GM12878 (cell line): ENCODE measurements at regions of chr7 and their contacts with region 1.

Region 1: GRCh38 chr7:106552645-106553445 is 108.1 kb downstream of the CCDC71L start:
- DNase-seq: peak; percentile 97
- ATAC-seq: peak; percentile 98
- H3K4me3 ChIP-seq: no peak overlapping the region
- H3K27ac ChIP-seq: peak overlapping the region; percentile 79
- H3K4me1 ChIP-seq: peaks cover 19% of the 10 kb centered on the region
- H3K27me3 ChIP-seq: no peaks in the 10 kb centered on the region
- CTCF ChIP-seq: no peak
- EP300 ChIP-seq: peak; percentile 97 to 100
- POLR2A ChIP-seq: no peak
- RAD21 ChIP-seq: no peak

Region 2: DNA sequence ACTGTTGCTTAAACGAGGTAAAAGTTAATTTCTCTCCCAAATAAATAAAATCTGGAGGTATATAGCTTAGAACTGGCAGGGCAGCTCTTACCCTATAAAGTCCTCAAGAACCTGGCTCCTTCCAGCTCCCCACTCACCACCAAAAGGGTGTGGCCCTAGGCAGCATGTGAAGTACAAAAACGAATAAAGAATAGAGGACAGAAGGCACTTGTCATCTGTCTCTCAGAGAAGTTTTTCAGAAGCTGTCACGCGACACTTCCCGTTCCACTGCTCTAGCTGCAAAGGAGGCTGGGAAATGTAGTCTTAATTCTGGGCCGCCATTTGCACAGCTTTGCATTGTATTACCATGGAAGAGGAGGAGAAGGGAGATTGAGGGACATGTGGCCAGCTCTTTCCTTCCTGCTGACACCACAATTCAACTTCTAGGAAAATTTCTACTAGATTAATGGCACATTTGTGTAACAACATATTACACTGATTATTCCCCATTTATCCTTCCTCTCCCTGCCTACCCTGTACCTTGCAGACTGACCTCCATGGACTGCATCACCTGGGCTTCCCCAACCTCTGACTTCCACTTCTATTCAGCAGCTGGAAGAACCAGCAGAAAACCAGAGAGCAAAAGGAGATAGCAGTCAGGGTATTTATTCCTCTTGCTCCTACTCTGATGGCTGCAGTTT is 46.0 kb after region 1 on chr7:
- CTCF ChIA-PET with region 1: no interaction called
- POLR2A ChIA-PET with region 1: no interaction called
- RAD21 ChIA-PET with region 1: interaction called, 4 read pairs
- SMC1A ChIA-PET with region 1: interaction called, 15 read pairs
- in situ Hi-C with region 1: no loop called
- intact Hi-C with region 1: loop called (anchors 5 kb)
- DNase-seq: peak; percentile 71
- ATAC-seq: peak; percentile 99
- H3K4me3 ChIP-seq: no peak overlapping the region
- H3K27ac ChIP-seq: no peak overlapping the region
- H3K4me1 ChIP-seq: no peaks in the 10 kb centered on the region
- H3K27me3 ChIP-seq: no peaks in the 10 kb centered on the region; a peak in 1 of 4 replicates
- CTCF ChIP-seq: no peak
- EP300 ChIP-seq: no peak
- POLR2A ChIP-seq: no peak
- RAD21 ChIP-seq: no peak

Region 3: GRCh38 chr7:106610996-106611886 is 58.4 kb after region 1 on chr7:
- CTCF ChIA-PET with region 1: no interaction called
- POLR2A ChIA-PET with region 1: no interaction called
- RAD21 ChIA-PET with region 1: no interaction called
- SMC1A ChIA-PET with region 1: interaction called, 6 read pairs
- in situ Hi-C with region 1: no loop called
- intact Hi-C with region 1: loop called (anchors 2 kb)
- DNase-seq: peak; percentile 42
- ATAC-seq: peak; percentile 92
- H3K4me3 ChIP-seq: no peak overlapping the region
- H3K27ac ChIP-seq: no peak overlapping the region
- H3K4me1 ChIP-seq: no peaks in the 10 kb centered on the region
- H3K27me3 ChIP-seq: no peaks in the 10 kb centered on the region
- CTCF ChIP-seq: no peak
- EP300 ChIP-seq: peak; percentile 87 to 94; a peak in 3 of 4 replicates
- POLR2A ChIP-seq: no peak
- RAD21 ChIP-seq: no peak

Region 4: DNA sequence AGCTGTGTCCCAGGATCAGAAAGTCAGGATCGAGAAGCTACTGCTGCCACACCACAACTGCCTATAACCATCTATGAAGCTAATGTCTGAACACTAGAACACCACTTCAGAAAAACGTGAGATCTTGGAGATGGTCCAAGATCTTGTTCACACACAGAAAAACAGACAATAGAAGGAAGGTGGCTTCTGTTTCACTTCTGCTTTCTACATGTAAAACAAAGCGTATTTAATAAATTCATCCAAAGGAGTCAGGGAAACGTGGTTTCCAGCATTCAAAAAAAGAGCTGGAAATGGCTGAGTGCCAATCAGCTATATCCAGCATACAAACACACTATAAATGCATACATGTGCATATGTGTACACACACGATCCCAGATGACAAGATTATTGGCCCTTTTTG is 178.3 kb after region 1 on chr7:
- CTCF ChIA-PET with region 1: interaction called, 30 read pairs
- POLR2A ChIA-PET with region 1: no interaction called
- RAD21 ChIA-PET with region 1: interaction called, 5 read pairs
- SMC1A ChIA-PET with region 1: interaction called, 18 read pairs
- in situ Hi-C with region 1: loop called (anchors 5 kb)
- intact Hi-C with region 1: no loop called
- DNase-seq: peak; percentile 91
- ATAC-seq: peak; percentile 95
- H3K4me3 ChIP-seq: no peak overlapping the region
- H3K27ac ChIP-seq: peak overlapping the region; percentile 40; the same call in 1 of the 2 replicates
- H3K4me1 ChIP-seq: peaks cover 17% of the 10 kb centered on the region
- H3K27me3 ChIP-seq: no peaks in the 10 kb centered on the region
- CTCF ChIP-seq: no peak
- EP300 ChIP-seq: peak in 1 of 2 experiments; percentile 80; a peak in 2 of 4 replicates
- POLR2A ChIP-seq: no peak
- RAD21 ChIP-seq: 0 out of 2 replicates have a peak, but pooled peaks have one; percentile 7

Region 5: DNA sequence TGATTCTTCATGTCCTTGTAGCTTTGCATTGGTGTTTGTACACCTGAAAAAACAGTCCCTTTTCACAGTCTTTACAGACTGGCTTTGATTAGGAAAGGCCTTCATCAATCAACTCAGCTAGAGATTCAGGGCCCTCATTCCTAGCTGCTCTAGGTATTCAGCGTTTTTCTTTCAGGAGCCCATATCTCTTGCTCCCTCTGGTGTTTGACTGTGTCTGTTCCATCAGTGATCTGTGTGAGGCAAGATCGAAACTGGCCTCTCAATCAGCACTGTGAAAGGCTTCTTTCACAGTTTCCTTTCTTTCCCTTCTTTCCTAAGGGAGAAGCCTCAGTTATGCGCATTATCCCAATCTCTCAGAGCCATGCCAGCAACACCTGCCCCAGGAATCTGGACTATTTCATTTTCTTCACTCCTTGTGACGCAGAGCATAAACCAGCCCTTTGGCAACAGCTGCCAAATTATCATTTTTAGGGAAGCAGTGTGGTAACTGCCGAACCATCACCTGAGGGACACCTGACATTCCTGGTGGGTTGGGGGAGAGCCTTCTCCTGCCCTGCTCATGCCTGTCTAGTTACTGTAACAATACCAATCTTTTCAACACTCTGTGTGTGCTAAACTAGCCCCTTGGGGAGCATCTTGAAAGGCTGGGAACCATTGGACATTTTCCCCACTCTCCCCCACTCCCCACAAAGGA is 183.8 kb after region 1 on chr7:
- CTCF ChIA-PET with region 1: interaction called, 30 read pairs
- POLR2A ChIA-PET with region 1: no interaction called
- RAD21 ChIA-PET with region 1: interaction called, 5 read pairs
- SMC1A ChIA-PET with region 1: interaction called, 18 read pairs
- in situ Hi-C with region 1: loop called (anchors 5 kb)
- intact Hi-C with region 1: no loop called
- DNase-seq: peak; percentile 48
- ATAC-seq: peak; percentile 98
- H3K4me3 ChIP-seq: no peak overlapping the region
- H3K27ac ChIP-seq: no peak overlapping the region
- H3K4me1 ChIP-seq: peaks cover 15% of the 10 kb centered on the region
- H3K27me3 ChIP-seq: no peaks in the 10 kb centered on the region
- CTCF ChIP-seq: peak; percentile 75 to 86 (median 80)
- EP300 ChIP-seq: no peak
- POLR2A ChIP-seq: no peak
- RAD21 ChIP-seq: peak; percentile 97